B cell (primary cell): ENCODE measurements at regions of chr2 and their contacts with region 1.

Region 1: DNA sequence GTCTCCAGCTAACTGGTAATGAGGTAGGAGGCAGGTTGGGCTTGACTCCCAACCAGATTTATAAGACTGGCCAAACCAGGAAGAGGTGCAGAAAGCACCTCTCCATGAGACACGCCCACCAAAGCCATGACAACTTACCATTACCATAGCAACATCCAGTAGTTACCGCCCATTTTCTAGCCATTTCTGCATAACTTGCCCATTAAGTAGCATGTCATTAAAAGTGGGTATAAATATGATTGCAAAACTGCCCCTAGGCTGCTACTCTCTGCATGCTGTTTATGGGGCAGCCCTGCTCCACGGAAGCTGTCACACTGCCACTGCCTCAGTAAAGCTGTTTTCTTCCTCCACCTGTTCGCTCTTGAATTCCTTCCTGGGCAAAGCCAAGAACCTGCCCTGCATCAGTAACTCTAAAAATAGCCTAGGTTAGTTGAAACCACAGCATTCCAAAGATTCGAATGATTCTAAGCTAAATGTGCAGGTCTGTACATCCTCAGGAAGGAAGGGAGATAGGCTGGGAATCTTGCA is 131.9 kb downstream of the ATL2 start:
- DNase-seq: no peak
- ATAC-seq: no peak
- H3K4me3 ChIP-seq: no peak overlapping the region
- H3K4me3 Mint-ChIP-seq: no peak overlapping the region
- H3K27ac ChIP-seq: no peak overlapping the region
- H3K27ac Mint-ChIP-seq: no peak overlapping the region
- H3K4me1 ChIP-seq: no peaks in the 10 kb centered on the region
- H3K4me1 Mint-ChIP-seq: no peaks in the 10 kb centered on the region
- H3K27me3 ChIP-seq: no peaks in the 10 kb centered on the region
- H3K27me3 Mint-ChIP-seq: peaks cover 9% of the 10 kb centered on the region
- CTCF ChIP-seq: no peak

Region 2: DNA sequence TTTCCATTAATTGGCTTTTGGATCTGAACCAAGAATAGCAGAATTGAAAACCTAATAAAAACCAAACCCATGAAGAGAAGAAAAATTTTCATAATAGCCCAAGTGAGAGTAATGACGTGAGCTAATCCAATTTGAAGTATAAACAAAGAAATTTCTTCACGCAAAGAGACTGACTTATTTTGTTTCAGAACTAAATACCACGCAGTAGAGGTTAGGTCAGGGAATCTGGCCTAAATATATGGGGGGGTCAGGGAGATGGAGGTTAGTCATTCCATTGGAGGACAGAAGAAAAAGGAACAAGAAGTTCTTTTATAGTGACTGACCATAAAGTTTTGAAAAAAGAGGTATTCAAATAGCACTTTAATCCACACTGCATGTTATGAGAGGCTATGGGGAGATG is 75.1 kb before region 1 on chr2:
- CTCF ChIA-PET with region 1: no interaction called
- POLR2A ChIA-PET with region 1: no interaction called
- intact Hi-C with region 1: loop called (anchors 2 kb)
- DNase-seq: no peak
- ATAC-seq: no peak
- H3K4me3 ChIP-seq: no peak overlapping the region
- H3K4me3 Mint-ChIP-seq: no peak overlapping the region
- H3K27ac ChIP-seq: no peak overlapping the region
- H3K27ac Mint-ChIP-seq: no peak overlapping the region
- H3K4me1 ChIP-seq: no peaks in the 10 kb centered on the region
- H3K4me1 Mint-ChIP-seq: no peaks in the 10 kb centered on the region
- H3K27me3 ChIP-seq: peaks cover 0 to 14% (median 3%) of the 10 kb centered on the region in 4 experiments
- H3K27me3 Mint-ChIP-seq: peaks cover 55% of the 10 kb centered on the region
- CTCF ChIP-seq: no peak

Region 3: GRCh38 chr2:38465789-38466127 is 220.6 kb after region 1 on chr2:
- CTCF ChIA-PET with region 1: no interaction called
- POLR2A ChIA-PET with region 1: no interaction called
- intact Hi-C with region 1: no loop called
- DNase-seq: peak; percentile 30
- ATAC-seq: no peak
- H3K4me3 ChIP-seq: no peak overlapping the region
- H3K4me3 Mint-ChIP-seq: no peak overlapping the region
- H3K27ac ChIP-seq: no peak overlapping the region
- H3K27ac Mint-ChIP-seq: no peak overlapping the region
- H3K4me1 ChIP-seq: no peaks in the 10 kb centered on the region
- H3K4me1 Mint-ChIP-seq: no peaks in the 10 kb centered on the region
- H3K27me3 ChIP-seq: no peaks in the 10 kb centered on the region
- H3K27me3 Mint-ChIP-seq: peaks cover 16% of the 10 kb centered on the region
- CTCF ChIP-seq: peak; percentile 18